Activated B cell treated with CpG ODN at 0.5 μM for 24 hours (primary cell): ENCODE measurements at regions of chr2 and their contacts with region 1.

Region 1: GRCh38 chr2:178112202-178113152 is at the start of gene RBM45:
- DNase-seq: peak; percentile 81
- ATAC-seq: peak; percentile 98
- H3K4me3 Mint-ChIP-seq: peak within 1 kb of the TSS; percentile 96
- H3K27ac Mint-ChIP-seq: peak within 1 kb of the TSS; percentile 72
- H3K4me1 Mint-ChIP-seq: peaks cover 36% of the 10 kb centered on the region
- H3K27me3 Mint-ChIP-seq: no peaks in the 10 kb centered on the region
- CTCF ChIP-seq: peak; percentile 93
- total RNA-seq, gene RBM45: 17.9 and 18.8 TPM in 2 replicates

Region 2: DNA sequence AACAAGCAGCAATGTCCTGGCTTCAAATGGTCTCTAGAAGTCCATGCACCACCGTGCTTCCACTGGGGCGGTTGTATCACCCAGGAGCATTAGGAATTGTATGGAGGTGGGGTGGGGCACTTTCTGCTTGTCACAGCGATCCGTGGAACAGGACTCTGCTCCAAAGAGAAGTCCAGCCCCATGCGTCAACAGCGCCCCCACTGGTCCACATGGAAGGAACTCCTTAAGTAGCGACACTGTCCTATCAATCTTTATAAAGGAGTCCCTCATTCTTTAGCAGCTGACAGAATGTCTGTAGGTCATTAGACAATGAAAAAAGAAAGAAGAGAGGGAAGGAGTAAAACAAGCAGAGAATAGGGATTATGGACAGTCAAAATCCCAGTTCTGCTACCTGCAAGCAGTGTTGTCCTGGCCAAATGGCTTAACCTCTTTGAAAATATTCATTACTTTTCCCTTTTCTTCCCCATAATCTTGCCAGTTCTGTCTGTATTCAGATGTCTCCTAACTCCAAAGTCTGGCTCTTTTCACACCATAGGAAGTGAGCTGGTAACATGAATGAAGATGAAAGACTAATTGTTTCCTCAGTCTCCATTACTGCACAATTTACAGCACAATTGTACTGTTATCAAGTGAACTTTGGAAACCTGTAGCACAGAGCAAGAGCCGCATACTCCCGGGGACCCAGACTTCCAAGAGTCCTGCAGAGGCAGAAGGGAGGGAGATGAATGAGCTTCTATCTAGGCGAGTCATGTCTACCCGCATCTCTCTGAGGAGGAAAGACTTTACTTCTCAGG is 857.8 kb before region 1 on chr2:
- CTCF ChIA-PET with region 1: no interaction called
- POLR2A ChIA-PET with region 1: no interaction called
- intact Hi-C with region 1: loop called (anchors 2 kb)
- DNase-seq: no peak
- ATAC-seq: no peak
- H3K4me3 Mint-ChIP-seq: no peak overlapping the region
- H3K27ac Mint-ChIP-seq: no peak overlapping the region
- H3K4me1 Mint-ChIP-seq: peaks cover 87% of the 10 kb centered on the region
- H3K27me3 Mint-ChIP-seq: no peaks in the 10 kb centered on the region
- CTCF ChIP-seq: no peak

Region 3: DNA sequence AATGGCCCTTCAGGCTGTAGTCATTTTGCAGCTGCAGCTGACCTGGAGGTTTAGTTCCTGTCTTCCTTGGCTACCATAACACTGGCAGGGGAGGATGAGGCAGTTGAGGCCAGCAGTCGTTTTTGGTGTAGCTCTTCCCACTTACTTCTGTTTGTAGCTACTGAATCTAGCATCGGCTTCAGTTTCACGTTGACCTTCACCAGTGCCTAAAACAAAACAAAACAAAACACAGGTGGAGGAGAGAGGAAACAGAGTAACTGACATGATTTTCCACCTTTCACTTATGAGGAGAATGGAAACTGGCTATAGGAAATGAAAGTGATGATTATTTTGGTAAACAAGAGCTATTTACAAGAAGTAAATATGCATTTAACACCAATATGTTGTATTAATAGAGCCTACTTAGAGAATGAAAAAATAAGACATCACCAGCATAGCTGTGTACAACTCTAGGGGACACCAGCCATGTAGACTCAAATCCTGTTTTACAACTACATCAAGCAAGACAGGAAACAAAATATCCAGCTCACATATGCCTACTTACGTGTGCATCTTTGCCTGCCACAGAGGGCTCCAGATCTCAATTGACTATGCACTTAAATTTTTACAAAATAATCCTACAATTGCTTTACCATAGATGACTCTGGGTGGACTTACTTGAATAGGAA is 483.0 kb before region 1 on chr2:
- CTCF ChIA-PET with region 1: no interaction called
- POLR2A ChIA-PET with region 1: no interaction called
- intact Hi-C with region 1: loop called (anchors 10 kb)
- DNase-seq: no peak
- ATAC-seq: no peak
- H3K4me3 Mint-ChIP-seq: no peak overlapping the region
- H3K27ac Mint-ChIP-seq: no peak overlapping the region
- H3K4me1 Mint-ChIP-seq: peaks cover 16% of the 10 kb centered on the region
- H3K27me3 Mint-ChIP-seq: no peaks in the 10 kb centered on the region
- CTCF ChIP-seq: no peak

Region 4: GRCh38 chr2:178142274-178143065 is 30.0 kb after region 1 on chr2:
- CTCF ChIA-PET with region 1: no interaction called
- POLR2A ChIA-PET with region 1: no interaction called
- intact Hi-C with region 1: no loop called
- DNase-seq: no peak
- ATAC-seq: no peak
- H3K4me3 Mint-ChIP-seq: no peak overlapping the region
- H3K27ac Mint-ChIP-seq: no peak overlapping the region
- H3K4me1 Mint-ChIP-seq: no peaks in the 10 kb centered on the region
- H3K27me3 Mint-ChIP-seq: peaks cover 5% of the 10 kb centered on the region
- CTCF ChIP-seq: no peak

Region 5: DNA sequence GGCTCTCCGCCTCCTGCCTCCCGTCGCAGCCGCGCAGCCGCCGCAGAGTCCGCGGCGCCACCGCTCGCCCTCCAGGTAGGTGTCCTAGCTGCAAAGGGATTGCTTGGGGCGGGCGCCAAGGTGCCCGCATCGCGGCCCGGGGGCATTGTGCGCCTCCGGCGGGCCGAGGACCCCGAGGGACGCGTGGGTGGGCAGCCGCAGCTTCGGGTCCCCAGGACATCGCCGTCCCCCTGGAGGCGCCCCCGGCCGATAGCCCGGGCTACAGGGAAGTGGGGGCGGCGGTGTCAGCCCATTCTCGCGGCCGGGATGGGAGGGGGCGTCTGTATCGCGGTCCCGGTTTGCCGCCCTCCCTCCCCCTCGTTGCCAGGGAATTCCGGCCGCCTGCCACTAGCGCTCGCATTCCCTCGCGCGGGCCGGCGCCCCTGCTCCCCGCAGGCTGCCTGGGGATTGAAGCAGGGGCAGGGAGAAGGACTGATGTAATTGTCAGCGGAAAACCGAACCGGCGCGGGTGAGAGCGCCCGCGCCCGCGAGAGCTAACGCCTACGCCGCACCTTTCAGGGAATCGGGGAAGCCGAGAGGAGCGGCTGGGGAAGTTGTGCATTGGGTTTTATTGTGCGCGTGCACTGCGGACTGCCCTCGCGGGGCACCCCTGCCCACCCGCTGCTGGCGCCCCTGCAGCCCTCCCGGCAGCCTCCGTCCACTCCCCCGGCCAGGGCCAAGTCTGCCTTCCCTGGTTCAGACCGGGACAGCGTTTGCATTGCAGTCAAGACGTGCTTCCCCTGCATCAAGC is 82.3 kb after region 1 on chr2:
- CTCF ChIA-PET with region 1: no interaction called
- POLR2A ChIA-PET with region 1: interaction called, 5 read pairs
- intact Hi-C with region 1: loop called (anchors 5 kb)
- DNase-seq: no peak
- ATAC-seq: no peak
- H3K4me3 Mint-ChIP-seq: peak overlapping the region; percentile 67
- H3K27ac Mint-ChIP-seq: no peak overlapping the region
- H3K4me1 Mint-ChIP-seq: peaks cover 12% of the 10 kb centered on the region
- H3K27me3 Mint-ChIP-seq: peaks cover 44% of the 10 kb centered on the region
- CTCF ChIP-seq: no peak

Region 6: DNA sequence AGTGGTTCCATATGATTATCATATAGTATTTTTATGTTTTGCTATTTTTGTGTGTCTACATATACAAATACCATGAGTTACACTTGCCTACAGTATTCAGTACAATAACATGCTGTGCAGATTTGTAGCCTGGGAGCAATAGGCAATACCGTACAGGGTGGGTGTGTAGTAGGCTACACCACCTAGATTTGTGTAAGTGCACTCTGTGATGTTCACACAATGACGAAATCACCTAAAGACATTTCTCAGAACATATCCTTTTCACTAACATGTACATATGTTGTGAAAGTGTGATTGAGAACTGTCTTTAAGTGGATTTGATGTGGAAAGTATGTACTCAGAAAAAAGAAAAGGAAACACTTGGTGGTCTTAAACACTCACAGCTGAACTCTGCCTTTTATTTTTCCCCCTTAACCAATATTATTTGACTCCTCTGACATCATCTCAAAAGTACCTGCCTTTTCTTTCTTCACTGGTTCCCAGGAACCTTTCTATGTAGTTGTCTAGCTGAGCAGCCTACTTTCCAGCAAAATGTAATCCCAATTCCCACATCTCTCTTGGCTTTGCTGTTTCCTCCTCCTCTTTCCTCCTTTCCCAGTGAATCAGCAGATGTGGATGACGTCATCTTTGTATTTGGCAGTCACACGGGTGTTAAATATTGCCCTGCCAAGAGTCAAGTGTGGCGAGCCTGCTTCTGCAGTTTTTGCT is 129.5 kb after region 1 on chr2:
- CTCF ChIA-PET with region 1: no interaction called
- POLR2A ChIA-PET with region 1: no interaction called
- intact Hi-C with region 1: no loop called
- DNase-seq: no peak
- ATAC-seq: no peak
- H3K4me3 Mint-ChIP-seq: no peak overlapping the region
- H3K27ac Mint-ChIP-seq: no peak overlapping the region
- H3K4me1 Mint-ChIP-seq: no peaks in the 10 kb centered on the region
- H3K27me3 Mint-ChIP-seq: peaks cover 6% of the 10 kb centered on the region
- CTCF ChIP-seq: no peak

Region 7: DNA sequence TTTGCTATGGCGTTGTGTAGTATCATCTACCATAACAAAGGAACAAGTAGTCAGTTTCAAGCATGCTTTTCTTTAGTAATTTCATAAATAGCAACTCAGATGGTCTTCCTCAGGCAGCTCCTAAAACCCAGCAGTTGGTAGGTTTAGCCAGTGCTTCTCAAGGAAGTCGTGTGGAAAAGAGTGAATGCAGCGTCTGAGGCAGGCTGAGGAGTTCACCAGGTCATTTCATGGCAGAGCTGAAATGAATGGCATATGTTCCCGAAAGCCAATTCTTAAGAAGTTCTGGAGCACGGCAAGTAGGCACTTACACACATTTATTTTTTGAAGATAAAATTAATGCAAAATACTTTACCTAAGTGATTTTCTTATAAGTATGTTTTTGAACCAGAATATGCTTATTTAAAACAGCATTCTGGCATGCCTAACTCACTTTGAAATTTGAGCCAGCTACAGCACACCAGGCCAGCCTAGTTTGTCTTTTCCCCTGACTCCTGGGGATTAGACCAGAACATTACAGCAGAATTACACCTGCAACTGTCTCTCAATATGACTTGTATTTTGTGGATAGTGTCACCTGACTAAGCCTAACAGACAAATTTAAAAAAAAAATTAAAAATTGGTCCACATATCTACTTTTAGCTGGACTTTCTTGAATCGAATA is 144.0 kb after region 1 on chr2:
- CTCF ChIA-PET with region 1: no interaction called
- POLR2A ChIA-PET with region 1: no interaction called
- intact Hi-C with region 1: no loop called
- DNase-seq: no peak
- ATAC-seq: no peak
- H3K4me3 Mint-ChIP-seq: no peak overlapping the region
- H3K27ac Mint-ChIP-seq: no peak overlapping the region
- H3K4me1 Mint-ChIP-seq: no peaks in the 10 kb centered on the region
- H3K27me3 Mint-ChIP-seq: peaks cover 2% of the 10 kb centered on the region
- CTCF ChIP-seq: no peak

Region 8: GRCh38 chr2:178280244-178280852 is 167.9 kb after region 1 on chr2:
- CTCF ChIA-PET with region 1: no interaction called
- POLR2A ChIA-PET with region 1: no interaction called
- intact Hi-C with region 1: loop called (anchors 1 kb)
- DNase-seq: no peak
- ATAC-seq: peak; percentile 57
- H3K4me3 Mint-ChIP-seq: no peak overlapping the region
- H3K27ac Mint-ChIP-seq: no peak overlapping the region
- H3K4me1 Mint-ChIP-seq: no peaks in the 10 kb centered on the region
- H3K27me3 Mint-ChIP-seq: peaks cover 2% of the 10 kb centered on the region
- CTCF ChIP-seq: peak; percentile 31

Region 9: GRCh38 chr2:178414266-178415247 is 302.1 kb after region 1 on chr2:
- CTCF ChIA-PET with region 1: interaction called, 8 read pairs
- POLR2A ChIA-PET with region 1: interaction called, 3 read pairs
- intact Hi-C with region 1: loop called (anchors 1 kb)
- DNase-seq: peak; percentile 58
- ATAC-seq: peak; percentile 75
- H3K4me3 Mint-ChIP-seq: peak overlapping the region; percentile 94
- H3K27ac Mint-ChIP-seq: peak overlapping the region; percentile 89
- H3K4me1 Mint-ChIP-seq: peaks cover 20% of the 10 kb centered on the region
- H3K27me3 Mint-ChIP-seq: no peaks in the 10 kb centered on the region
- CTCF ChIP-seq: no peak

Region 10: DNA sequence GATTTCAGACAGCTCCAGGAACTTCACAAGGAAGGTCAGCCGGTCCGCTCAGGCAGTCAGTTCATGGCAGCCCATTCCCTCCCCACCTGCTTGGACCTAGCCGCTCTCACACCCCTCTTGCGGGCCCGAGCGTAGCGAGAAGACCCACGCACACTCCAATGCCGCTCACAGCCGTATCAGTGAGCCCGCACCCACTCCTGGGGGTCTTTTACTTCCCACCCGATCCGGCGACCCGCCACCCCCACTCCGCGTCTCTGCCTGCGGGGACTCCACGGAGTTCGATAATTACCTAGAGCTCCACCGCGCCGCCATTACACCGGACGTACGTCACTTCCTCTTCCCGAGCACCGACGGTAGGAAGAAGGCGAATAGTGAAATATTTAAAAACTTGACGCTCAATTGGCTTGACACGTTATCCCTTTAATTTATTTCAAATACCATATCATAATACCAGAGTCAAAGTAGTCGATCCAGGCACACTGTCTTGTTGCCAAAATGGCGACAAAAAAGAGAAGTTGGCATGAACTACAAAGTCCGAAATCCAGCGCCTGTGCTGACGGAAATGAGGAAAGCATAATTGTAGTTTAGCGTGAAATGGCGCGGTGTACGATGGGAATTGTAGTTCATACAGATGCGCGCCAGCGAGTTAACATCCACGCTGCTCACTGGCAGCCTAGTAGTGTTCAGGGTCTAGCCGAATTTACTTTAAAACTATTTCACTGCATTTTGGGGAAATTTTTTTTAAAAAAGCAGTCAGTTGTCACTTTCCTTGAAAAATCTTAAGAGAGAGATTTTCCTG is 1894.5 kb after region 1 on chr2 and contains the start of gene CWC22:
- CTCF ChIA-PET with region 1: no interaction called
- POLR2A ChIA-PET with region 1: no interaction called
- intact Hi-C with region 1: loop called (anchors 5 kb)
- DNase-seq: peak; percentile 75
- ATAC-seq: peak; percentile 93
- H3K4me3 Mint-ChIP-seq: peak within 1 kb of the TSS; percentile 93
- H3K27ac Mint-ChIP-seq: peak within 1 kb of the TSS; percentile 98
- H3K4me1 Mint-ChIP-seq: peaks cover 43% of the 10 kb centered on the region
- H3K27me3 Mint-ChIP-seq: no peaks in the 10 kb centered on the region
- CTCF ChIP-seq: no peak
- total RNA-seq, gene CWC22: 27.5 and 28.9 TPM in 2 replicates